CD4-positive, alpha-beta T cell (primary cell): ENCODE measurements at regions of chr2 and their contacts with region 1.

Region 1: DNA sequence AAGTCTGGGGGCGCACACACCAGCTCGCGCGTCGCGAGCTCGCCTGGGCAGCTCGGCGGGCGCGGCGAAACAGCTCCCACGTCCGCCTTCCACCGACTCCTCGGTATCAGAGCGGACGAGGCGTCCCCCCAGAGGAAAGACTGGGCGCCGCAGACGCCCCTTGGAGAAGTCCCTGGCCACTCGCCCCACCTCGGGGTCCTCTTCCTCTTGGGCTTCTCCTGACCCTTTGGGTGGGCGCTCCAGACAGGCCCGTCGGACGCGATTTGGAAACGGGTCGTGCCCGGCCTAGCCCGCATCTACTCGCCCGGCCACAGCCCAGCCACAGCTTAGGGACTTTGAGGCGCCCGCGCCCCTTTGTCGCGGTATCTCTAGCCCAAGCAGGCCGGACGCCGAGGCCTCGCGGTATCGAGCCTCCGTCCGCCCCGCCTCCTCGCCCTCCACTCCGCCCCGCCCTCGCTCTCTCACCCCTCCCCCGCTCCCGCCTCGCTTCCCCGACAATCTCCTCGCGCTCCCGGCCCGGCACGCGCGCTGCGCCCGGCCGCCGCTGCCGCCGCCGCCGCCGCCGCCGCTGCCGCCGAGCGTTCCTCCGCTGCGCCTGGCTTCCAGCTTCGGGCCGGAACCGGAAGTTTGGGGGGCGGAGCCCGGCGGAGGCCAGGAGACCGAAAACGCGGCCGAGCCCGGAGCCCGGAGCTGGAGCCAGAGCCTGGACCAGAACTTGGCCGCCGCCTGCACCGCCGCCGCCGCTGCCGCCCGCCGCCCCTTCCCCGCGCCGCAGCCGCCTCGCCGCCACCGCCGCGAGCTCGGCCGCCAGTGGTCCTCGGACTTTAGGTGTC is 749 bp upstream of the ACVR2A start:
- DNase-seq: peak; percentile 80 to 94 (median 84)
- ATAC-seq: peak; percentile 79
- H3K4me3 ChIP-seq: peak overlapping the region; percentile 84
- H3K4me3 Mint-ChIP-seq: peak overlapping the region; percentile 96
- H3K27ac ChIP-seq: peak overlapping the region in 1 of 2 donors; percentile 38
- H3K27ac Mint-ChIP-seq: peak overlapping the region; percentile 87
- H3K4me1 ChIP-seq: peaks cover 19% of the 10 kb centered on the region
- H3K4me1 Mint-ChIP-seq: peaks cover 42% of the 10 kb centered on the region
- H3K27me3 ChIP-seq: no peaks in the 10 kb centered on the region
- H3K27me3 Mint-ChIP-seq: peaks cover 5% of the 10 kb centered on the region
- CTCF ChIP-seq: no peak

Region 2: DNA sequence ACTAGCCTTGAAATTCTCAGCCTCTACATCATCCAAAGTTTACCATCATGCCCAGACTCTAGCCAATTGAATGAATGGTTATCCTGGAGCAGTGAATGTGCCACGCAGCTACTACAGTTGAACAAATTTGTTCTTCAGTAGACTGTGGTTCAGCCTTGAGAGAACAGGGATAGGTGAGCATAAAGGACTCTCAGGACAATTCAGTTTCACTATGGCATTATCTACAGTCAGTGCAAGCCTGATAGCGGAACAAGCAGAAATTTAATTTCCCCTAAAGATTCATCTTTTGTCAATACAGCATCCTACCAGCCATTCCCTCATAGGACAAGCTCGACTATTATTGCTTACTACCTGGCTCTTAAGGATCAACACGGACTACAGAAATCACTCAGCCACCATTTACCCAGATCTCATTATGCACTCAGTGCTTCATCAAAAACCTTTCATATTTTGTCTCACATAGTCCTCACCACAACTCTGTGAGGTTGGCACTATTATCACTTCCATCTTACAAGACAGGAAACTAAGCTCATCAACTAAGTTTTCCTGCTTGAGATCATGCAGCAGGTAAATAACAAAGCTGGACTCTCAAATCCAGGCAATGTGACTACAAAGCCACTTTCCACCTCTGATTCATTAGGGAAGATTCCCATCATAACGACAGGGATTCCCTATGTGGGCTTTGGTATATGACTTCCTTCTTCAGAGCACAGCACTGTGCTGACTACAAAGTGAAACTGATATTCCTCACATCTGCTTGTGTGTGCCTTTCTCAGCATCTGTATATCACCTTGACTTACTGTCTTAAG is 180.7 kb before region 1 on chr2:
- CTCF ChIA-PET with region 1: no interaction called
- POLR2A ChIA-PET with region 1: interaction called, 25 read pairs
- intact Hi-C with region 1: loop called (anchors 1 to 5 kb)
- DNase-seq: peak in 7 of 14 experiments; percentile 3 to 71 (median 16)
- ATAC-seq: peak; percentile 85
- H3K4me3 ChIP-seq: peak overlapping the region; percentile 48
- H3K4me3 Mint-ChIP-seq: peak overlapping the region; percentile 82
- H3K27ac ChIP-seq: peak overlapping the region; percentile 41 to 90
- H3K27ac Mint-ChIP-seq: peak overlapping the region; percentile 91
- H3K4me1 ChIP-seq: peaks cover 19% of the 10 kb centered on the region
- H3K4me1 Mint-ChIP-seq: peaks cover 48% of the 10 kb centered on the region
- H3K27me3 ChIP-seq: no peaks in the 10 kb centered on the region
- H3K27me3 Mint-ChIP-seq: no peaks in the 10 kb centered on the region
- CTCF ChIP-seq: no peak

Region 3: DNA sequence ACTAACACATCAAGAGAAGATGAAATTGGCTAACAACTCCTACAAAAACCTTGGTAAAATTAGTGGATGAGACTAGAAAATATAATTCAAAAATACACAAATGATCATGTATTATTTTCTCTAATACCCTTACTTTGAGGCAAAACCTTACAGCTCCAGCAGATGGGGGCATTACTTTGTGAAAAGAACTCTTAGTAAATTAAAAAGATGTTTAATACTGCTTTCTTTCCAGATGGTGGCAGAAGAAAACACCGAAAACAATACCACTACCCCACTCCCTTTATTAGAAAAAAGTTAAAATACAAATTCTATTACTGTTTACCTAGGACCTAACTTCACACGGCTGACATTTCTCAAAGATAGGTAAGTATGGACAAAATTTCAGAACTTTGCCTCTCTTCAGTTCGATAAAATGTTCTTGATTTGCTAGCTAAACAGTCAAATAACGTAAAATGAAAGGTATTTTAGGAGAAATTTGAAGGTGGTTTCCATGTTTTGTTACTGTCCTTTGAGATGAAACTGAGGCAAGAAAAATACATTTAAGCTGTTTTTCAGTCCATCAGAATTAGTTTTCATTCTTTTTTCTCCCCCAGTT is 145.8 kb after region 1 on chr2:
- CTCF ChIA-PET with region 1: no interaction called
- POLR2A ChIA-PET with region 1: no interaction called
- intact Hi-C with region 1: no loop called
- DNase-seq: peak in 7 of 14 experiments; percentile 5 to 73 (median 44)
- ATAC-seq: peak; percentile 95
- H3K4me3 ChIP-seq: no peak overlapping the region
- H3K4me3 Mint-ChIP-seq: no peak overlapping the region
- H3K27ac ChIP-seq: no peak overlapping the region
- H3K27ac Mint-ChIP-seq: peak overlapping the region; percentile 25
- H3K4me1 ChIP-seq: no peaks in the 10 kb centered on the region
- H3K4me1 Mint-ChIP-seq: peaks cover 38% of the 10 kb centered on the region
- H3K27me3 ChIP-seq: no peaks in the 10 kb centered on the region
- H3K27me3 Mint-ChIP-seq: no peaks in the 10 kb centered on the region
- CTCF ChIP-seq: peak; percentile 97

Region 4: DNA sequence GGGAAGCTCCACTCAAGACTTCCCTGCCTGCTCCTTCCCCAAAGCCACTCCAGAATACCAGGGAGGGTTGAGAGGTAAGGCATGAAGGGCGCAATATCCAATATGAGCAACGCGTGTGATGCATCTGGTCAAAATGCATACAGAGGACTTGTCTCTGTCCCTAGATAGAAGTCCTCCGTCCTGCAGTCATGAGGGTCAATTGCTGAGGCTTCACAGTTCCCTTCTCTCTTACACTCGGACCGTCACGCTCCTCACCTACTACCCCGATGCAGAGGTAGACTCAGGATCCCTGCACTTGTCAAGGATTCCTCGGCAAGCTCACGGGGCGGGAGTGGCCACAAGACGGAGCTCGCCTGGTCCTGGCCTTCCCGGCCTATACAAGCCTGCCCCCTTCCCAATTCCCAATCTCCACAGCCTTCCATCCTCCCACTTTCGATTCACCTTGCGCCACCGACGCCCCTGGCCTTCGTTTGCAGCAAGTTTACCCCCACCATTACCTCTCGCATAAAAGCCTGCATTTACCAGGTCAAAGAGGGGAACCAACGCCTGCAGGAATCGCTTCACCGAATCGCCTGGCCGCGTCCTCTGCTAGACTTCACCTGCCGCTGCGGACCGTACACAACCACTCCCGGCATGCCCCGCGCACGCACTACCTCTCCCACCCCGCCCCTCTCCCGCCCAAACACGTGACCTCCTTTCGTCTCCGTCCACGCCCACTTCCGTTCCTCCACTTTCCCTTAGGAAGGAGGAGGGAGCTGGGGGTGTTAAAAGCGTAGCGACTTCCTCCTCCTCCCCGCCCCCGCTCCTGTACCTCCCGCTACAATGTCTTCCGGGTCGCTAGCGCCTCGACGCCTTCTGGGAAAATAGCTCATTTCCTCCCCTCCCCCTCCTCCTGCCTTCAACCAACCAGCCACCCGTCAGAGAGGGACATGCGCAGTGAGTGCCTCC is 176.3 kb after region 1 on chr2 and contains the start of gene ORC4:
- CTCF ChIA-PET with region 1: no interaction called
- POLR2A ChIA-PET with region 1: interaction called, 14 read pairs
- intact Hi-C with region 1: loop called in 1 of 2 experiments (anchors 5 kb)
- DNase-seq: peak; percentile 90 to 100 (median 97)
- ATAC-seq: peak; percentile 89
- H3K4me3 ChIP-seq: peak within 1 kb of the TSS; percentile 90
- H3K4me3 Mint-ChIP-seq: peak within 1 kb of the TSS; percentile 93
- H3K27ac ChIP-seq: peak within 1 kb of the TSS; percentile 86 to 94
- H3K27ac Mint-ChIP-seq: peak within 1 kb of the TSS; percentile 87
- H3K4me1 ChIP-seq: peaks cover 17% of the 10 kb centered on the region
- H3K4me1 Mint-ChIP-seq: peaks cover 82% of the 10 kb centered on the region
- H3K27me3 ChIP-seq: no peaks in the 10 kb centered on the region
- H3K27me3 Mint-ChIP-seq: no peaks in the 10 kb centered on the region
- CTCF ChIP-seq: no peak
- total RNA-seq, gene ORC4: 29.4 to 33.9 TPM

Region 5: GRCh38 chr2:148874868-148875341 is 1030.8 kb after region 1 on chr2 and contains the start of gene KIF5C:
- CTCF ChIA-PET with region 1: no interaction called
- POLR2A ChIA-PET with region 1: no interaction called
- intact Hi-C with region 1: loop called in 1 of 2 experiments (anchors 5 kb)
- DNase-seq: peak; percentile 78 to 95 (median 88)
- ATAC-seq: peak; percentile 90
- H3K4me3 ChIP-seq: peak within 1 kb of the TSS; percentile 70
- H3K4me3 Mint-ChIP-seq: peak within 1 kb of the TSS; percentile 92
- H3K27ac ChIP-seq: no peak within 1 kb of the TSS
- H3K27ac Mint-ChIP-seq: no peak within 1 kb of the TSS
- H3K4me1 ChIP-seq: peaks cover 24% of the 10 kb centered on the region
- H3K4me1 Mint-ChIP-seq: peaks cover 24% of the 10 kb centered on the region
- H3K27me3 ChIP-seq: peaks cover 2 to 13% of the 10 kb centered on the region in 2 experiments
- H3K27me3 Mint-ChIP-seq: peaks cover 52% of the 10 kb centered on the region
- CTCF ChIP-seq: no peak
- total RNA-seq, gene KIF5C: 7.3 to 8.1 TPM